Activated naive CD4-positive, alpha-beta T cell treated with anti-CD3 and anti-CD28 coated beads for 36 hours (primary cell): ENCODE measurements at regions of chr12 and their contacts with region 1.

Region 1: DNA sequence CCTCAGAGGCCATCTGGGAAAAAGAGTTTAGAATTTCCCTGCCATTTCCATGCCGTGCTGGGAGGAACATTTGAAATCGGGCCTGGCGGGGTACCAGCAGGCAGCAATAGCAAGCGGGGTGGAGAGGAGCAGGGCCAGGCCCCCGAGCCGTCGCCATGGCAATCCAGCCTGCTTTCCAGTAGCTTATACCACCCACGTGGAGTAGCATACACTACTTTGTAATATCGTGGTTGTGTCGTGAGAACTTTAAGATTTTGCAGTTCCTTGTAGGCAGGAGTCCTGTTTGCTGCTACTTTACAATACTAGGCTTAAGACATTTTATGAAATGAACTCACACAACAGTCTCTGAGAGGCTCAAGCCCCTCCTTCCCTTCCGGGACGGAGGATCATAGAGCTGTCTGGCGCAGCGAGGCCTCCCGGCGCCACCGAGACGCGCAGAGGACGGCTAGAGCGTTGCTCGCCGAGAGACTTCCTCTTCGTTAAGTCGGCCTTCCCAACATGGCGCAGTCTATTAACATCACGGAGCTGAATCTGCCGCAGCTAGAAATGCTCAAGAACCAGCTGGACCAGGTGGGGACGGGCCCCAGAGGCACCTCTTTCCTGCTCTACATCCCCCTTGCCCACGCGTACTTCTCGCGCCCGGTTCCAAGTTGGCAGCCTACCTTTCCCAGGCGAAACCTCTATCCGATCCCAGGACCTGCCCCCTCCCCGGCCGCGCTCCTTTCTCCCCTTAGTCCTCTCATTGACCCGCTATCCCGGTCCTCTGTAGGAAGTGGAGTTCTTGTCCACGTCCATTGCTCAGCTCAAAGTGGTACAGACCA is at the start of gene PFDN5:
- DNase-seq: peak; percentile 94
- H3K4me3 Mint-ChIP-seq: peak within 1 kb of the TSS; percentile 98
- H3K27ac Mint-ChIP-seq: peak within 1 kb of the TSS; percentile 95
- H3K4me1 Mint-ChIP-seq: peaks cover 53% of the 10 kb centered on the region
- H3K27me3 Mint-ChIP-seq: no peaks in the 10 kb centered on the region
- total RNA-seq, gene PFDN5: 376 to 383 TPM

Region 2: GRCh38 chr12:51941011-51941581 is 1354.2 kb before region 1 on chr12:
- CTCF ChIA-PET with region 1: no interaction called
- intact Hi-C with region 1: no loop called
- DNase-seq: no peak
- H3K4me3 Mint-ChIP-seq: no peak overlapping the region
- H3K27ac Mint-ChIP-seq: no peak overlapping the region
- H3K4me1 Mint-ChIP-seq: peaks cover 4% of the 10 kb centered on the region
- H3K27me3 Mint-ChIP-seq: no peaks in the 10 kb centered on the region

Region 3: GRCh38 chr12:53454710-53455109 is 159.4 kb after region 1 on chr12:
- CTCF ChIA-PET with region 1: no interaction called
- intact Hi-C with region 1: no loop called
- DNase-seq: no peak
- H3K4me3 Mint-ChIP-seq: peak overlapping the region; percentile 6
- H3K27ac Mint-ChIP-seq: peak overlapping the region; percentile 70
- H3K4me1 Mint-ChIP-seq: peaks cover 48% of the 10 kb centered on the region
- H3K27me3 Mint-ChIP-seq: no peaks in the 10 kb centered on the region

Region 4: GRCh38 chr12:53727310-53728041 is 432.2 kb after region 1 on chr12 and contains the start of gene CALCOCO1:
- CTCF ChIA-PET with region 1: no interaction called
- intact Hi-C with region 1: loop called (anchors 5 kb)
- DNase-seq: peak; percentile 99
- H3K4me3 Mint-ChIP-seq: peak within 1 kb of the TSS; percentile 92
- H3K27ac Mint-ChIP-seq: peak within 1 kb of the TSS; percentile 87
- H3K4me1 Mint-ChIP-seq: peaks cover 16% of the 10 kb centered on the region
- H3K27me3 Mint-ChIP-seq: no peaks in the 10 kb centered on the region
- total RNA-seq, gene CALCOCO1: 8.1 to 8.3 TPM